ENCODE measurements at regions of chr12 and their contacts with region 1.

Region 1: GRCh38 chr12:81150382-81150781 is 72.5 kb downstream of the ACSS3 start:
- DNase-seq: no peak
- H3K4me3 ChIP-seq: no peak overlapping the region
- H3K27ac ChIP-seq: no peak overlapping the region
- H3K4me1 ChIP-seq: no peaks in the 10 kb centered on the region
- H3K27me3 ChIP-seq: no peaks in the 10 kb centered on the region
- CTCF ChIP-seq: no peak

Region 2: GRCh38 chr12:81022531-81022930 is 127.9 kb before region 1 on chr12:
- CTCF ChIA-PET with region 1: no interaction called
- POLR2A ChIA-PET with region 1: no interaction called
- intact Hi-C with region 1: no loop called
- DNase-seq: no peak
- H3K4me3 ChIP-seq: no peak overlapping the region
- H3K27ac ChIP-seq: no peak overlapping the region
- H3K4me1 ChIP-seq: no peaks in the 10 kb centered on the region
- H3K27me3 ChIP-seq: no peaks in the 10 kb centered on the region
- CTCF ChIP-seq: no peak

Region 3: GRCh38 chr12:81086342-81086741 is 64.0 kb before region 1 on chr12:
- CTCF ChIA-PET with region 1: no interaction called
- POLR2A ChIA-PET with region 1: no interaction called
- intact Hi-C with region 1: no loop called
- DNase-seq: no peak
- H3K4me3 ChIP-seq: no peak overlapping the region
- H3K27ac ChIP-seq: no peak overlapping the region
- H3K4me1 ChIP-seq: 0 out of 2 replicates have a peak, but pooled peaks cover 5% of the 10 kb centered on the region
- H3K27me3 ChIP-seq: no peaks in the 10 kb centered on the region
- CTCF ChIP-seq: no peak

Region 4: GRCh38 chr12:81128930-81129554 is 21.3 kb before region 1 on chr12:
- CTCF ChIA-PET with region 1: interaction called, 10 read pairs
- POLR2A ChIA-PET with region 1: no interaction called
- intact Hi-C with region 1: no loop called
- DNase-seq: peak; percentile 4 to 42
- H3K4me3 ChIP-seq: no peak overlapping the region
- H3K27ac ChIP-seq: no peak overlapping the region
- H3K4me1 ChIP-seq: no peaks in the 10 kb centered on the region
- H3K27me3 ChIP-seq: no peaks in the 10 kb centered on the region
- CTCF ChIP-seq: peak; percentile 85